ENCODE measurements at regions of chr20 and their contacts with region 1.

Region 1: GRCh38 chr20:25696384-25697131 is at the start of gene ZNF337:
- DNase-seq: peak; percentile 98
- H3K4me3 Mint-ChIP-seq: peak within 1 kb of the TSS; percentile 95
- H3K27ac Mint-ChIP-seq: peak within 1 kb of the TSS; percentile 94
- H3K4me1 Mint-ChIP-seq: peaks cover 22% of the 10 kb centered on the region
- H3K27me3 Mint-ChIP-seq: peaks cover 4% of the 10 kb centered on the region
- total RNA-seq, gene ZNF337: 15.7 and 16.1 TPM in 2 replicates

Region 2: GRCh38 chr20:25407311-25408169 is 289.0 kb before region 1 on chr20 and contains the start of gene GINS1:
- intact Hi-C with region 1: loop called (anchors 2 kb)
- DNase-seq: peak; percentile 96
- H3K4me3 Mint-ChIP-seq: peak within 1 kb of the TSS; percentile 90
- H3K27ac Mint-ChIP-seq: peak within 1 kb of the TSS; percentile 95
- H3K4me1 Mint-ChIP-seq: peaks cover 19% of the 10 kb centered on the region
- H3K27me3 Mint-ChIP-seq: no peaks in the 10 kb centered on the region
- total RNA-seq, gene GINS1: 43.0 and 43.2 TPM in 2 replicates

Region 3: DNA sequence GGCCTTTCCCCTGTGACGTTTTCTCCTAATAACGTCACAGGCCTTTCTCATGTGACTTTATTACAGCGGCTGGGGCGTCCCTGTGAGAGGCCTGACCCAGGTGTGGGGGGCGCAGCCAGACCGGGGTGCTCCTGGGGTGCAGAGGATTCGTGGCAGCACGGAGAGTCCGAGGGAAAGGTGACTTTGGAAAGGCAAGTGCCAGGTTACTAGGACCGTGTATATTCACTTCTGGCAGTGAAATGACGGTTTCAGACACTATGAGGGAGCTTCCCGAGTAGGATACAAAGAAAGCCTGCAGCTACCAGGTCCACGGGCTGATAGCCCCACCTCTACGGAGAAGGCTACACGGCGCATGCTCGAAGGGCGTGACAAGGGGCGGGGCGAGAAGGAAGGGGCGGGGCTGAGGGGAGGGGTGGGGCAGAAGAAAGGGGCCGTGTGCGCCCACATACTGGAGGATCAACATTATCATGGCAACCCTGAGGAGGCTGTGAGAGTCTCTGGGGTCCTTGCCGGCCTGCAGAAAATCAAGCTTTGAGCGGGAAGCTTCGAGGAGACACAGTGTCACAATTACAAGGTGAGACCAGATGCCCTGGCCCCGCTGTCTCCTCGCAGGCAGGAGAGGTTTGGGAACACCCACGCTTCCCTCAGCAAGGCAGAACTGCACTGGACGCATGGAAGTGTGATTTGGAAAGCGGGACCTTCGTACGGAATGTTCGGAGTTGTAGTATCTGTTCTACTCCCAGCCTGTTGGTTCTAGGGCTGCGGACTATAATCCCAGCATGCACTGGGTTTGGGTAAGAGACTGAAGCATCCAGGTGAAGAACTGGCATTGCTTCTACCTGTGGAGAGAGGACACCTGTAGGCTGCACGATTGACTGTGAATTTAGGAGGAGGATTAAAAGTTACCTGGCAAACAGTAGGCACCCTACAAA is 54.5 kb after region 1 on chr20:
- intact Hi-C with region 1: loop called (anchors 5 kb)
- DNase-seq: peak; percentile 82
- H3K4me3 Mint-ChIP-seq: peak overlapping the region; percentile 87
- H3K27ac Mint-ChIP-seq: peak overlapping the region; percentile 63
- H3K4me1 Mint-ChIP-seq: peaks cover 12% of the 10 kb centered on the region
- H3K27me3 Mint-ChIP-seq: peaks cover 2% of the 10 kb centered on the region

Measured in activated CD4-positive, alpha-beta T cell treated with anti-CD3 and anti-CD28 coated beads, Interleukin-2, amount 10 ng/mL, durations not matched to agents 24 days and 14 days (primary cell).